Right ventricle myocardium inferior (tissue), 1 donor: ENCODE measurements at regions of chr18 and their contacts with region 1.

Region 1: GRCh38 chr18:58321986-58322385 is 278.0 kb downstream of the NEDD4L start:
- DNase-seq: no peak
- ATAC-seq: peak; percentile 92

Region 2: DNA sequence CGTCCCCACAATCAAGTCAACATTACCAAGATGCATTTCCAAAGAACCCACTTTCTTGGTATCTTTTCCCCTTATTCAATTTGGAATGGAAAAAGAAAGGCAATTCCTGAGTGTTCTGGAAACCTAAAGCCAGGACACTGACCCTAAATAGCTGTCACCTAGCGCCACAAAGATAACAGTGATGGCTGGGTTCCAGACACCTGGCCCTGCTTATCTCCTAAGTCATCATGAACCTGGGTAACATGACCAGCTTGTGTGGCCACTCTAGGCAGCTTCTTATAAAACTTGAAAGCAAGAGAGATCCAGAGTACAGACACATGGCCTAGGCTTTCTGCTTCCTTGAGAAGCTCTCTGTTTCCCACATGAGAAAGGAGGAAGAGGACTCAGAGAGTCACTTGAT is 1079.7 kb before region 1 on chr18:
- intact Hi-C with region 1: no loop called
- DNase-seq: no peak
- ATAC-seq: no peak

Region 3: DNA sequence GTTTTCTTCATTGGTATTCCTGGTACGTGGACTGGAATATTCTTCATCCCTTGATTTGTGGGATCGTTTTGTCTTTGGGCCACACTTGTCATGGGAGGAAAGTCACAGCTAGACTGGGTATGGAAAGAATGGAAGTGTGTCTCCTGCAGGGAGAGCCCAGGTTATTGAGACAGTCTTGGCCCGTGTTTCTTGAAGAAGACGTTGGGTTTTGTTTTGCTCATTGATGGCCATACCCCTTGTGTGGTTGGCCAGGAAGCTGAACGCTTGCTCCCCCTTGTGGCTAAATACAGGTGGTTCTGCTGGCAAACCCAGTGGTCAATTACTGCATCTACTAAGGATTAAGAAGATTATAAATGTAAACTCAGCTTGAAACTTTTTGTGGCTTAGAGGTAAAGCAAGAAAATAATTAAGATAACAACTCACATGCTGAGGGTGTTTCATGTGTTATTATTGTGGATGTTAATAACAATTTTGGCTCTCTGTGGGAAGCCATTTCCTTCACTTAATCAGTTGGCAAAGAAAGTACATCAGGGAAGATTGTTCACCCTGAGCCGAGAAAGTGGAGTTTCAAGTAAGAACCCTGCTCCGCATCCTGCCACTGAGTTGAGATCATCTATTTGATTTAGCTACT is 186.2 kb before region 1 on chr18:
- intact Hi-C with region 1: loop called (anchors 5 kb)
- DNase-seq: no peak
- ATAC-seq: peak; percentile 56

Region 4: DNA sequence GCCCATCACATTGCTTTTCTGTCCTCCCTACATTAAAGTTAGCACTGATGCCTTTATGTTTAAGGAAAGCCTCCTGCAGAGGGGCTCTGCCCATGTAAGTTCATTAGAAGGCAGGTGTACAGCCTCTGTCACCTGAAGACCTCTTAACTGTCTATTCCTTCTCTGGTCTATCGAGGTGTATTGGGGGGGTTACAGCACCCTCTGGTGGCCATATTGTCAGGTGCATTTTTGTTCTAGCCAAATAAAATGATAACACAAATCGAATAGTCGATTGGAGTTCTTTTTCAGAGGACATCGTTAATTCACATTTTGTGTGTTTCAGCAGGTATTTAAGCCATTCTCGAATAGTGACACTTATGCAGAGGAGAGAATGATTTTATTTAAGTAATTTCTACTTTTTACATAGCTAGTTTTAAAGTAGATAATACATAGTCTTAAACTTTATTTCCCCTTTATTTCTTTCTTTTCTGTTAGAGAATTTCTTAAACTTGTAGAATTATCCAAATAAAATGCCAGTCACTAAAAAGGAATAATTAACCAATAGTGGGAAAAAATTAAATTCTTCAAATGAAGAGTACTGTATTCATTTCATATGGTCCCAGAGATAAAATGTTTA is 141.1 kb before region 1 on chr18:
- intact Hi-C with region 1: loop called (anchors 2 kb)
- DNase-seq: no peak
- ATAC-seq: no peak

Region 5: DNA sequence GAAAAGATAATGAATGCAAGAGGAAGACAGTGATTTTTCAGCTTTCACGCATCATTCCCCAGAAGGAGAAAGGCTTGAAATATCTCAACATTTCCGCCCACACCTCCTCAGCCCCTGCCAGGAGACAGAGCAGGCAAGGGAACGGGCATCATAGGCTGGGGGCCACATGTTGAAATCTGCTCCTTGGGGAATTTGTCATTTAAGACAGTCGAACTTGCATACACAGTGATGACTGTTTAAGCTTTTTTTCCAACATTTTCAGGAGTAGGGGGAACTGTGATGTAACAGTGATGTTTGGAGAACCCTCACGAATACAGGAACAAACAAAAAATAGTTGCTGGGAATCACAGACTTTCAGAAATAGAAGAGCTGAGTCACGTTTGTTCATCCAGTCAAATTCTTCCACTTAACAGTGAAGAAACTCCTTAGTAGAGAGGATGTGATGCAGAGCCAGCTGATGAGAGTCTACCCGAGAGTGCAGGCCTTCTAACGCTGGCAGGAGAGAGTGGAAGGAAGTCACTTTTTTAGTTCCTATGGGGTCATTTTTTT is 40.1 kb after region 1 on chr18:
- intact Hi-C with region 1: no loop called
- DNase-seq: no peak
- ATAC-seq: peak; percentile 86